ENCODE measurements at regions of chr5 and their contacts with region 1.

Region 1: GRCh38 chr5:36397901-36398536 is 96.3 kb upstream of the RANBP3L start:
- DNase-seq: peak; percentile 58
- H3K4me3 ChIP-seq: no peak overlapping the region
- H3K27ac ChIP-seq: no peak overlapping the region
- H3K4me1 ChIP-seq: peaks cover 48% of the 10 kb centered on the region
- CTCF ChIP-seq: peak; percentile 89

Region 2: GRCh38 chr5:36079200-36079761 is 318.7 kb before region 1 on chr5:
- CTCF ChIA-PET with region 1: no interaction called
- POLR2A ChIA-PET with region 1: no interaction called
- intact Hi-C with region 1: loop called (anchors 5 kb)
- DNase-seq: peak; percentile 63
- H3K4me3 ChIP-seq: no peak overlapping the region
- H3K27ac ChIP-seq: no peak overlapping the region
- H3K4me1 ChIP-seq: no peaks in the 10 kb centered on the region
- CTCF ChIP-seq: peak; percentile 87

Region 3: GRCh38 chr5:36177715-36178523 is 220.1 kb before region 1 on chr5:
- CTCF ChIA-PET with region 1: no interaction called
- POLR2A ChIA-PET with region 1: interaction called, 9 read pairs
- intact Hi-C with region 1: loop called (anchors 1 kb)
- DNase-seq: peak; percentile 57
- H3K4me3 ChIP-seq: no peak overlapping the region
- H3K27ac ChIP-seq: no peak overlapping the region
- H3K4me1 ChIP-seq: peaks cover 14% of the 10 kb centered on the region
- CTCF ChIP-seq: peak; percentile 90

Region 4: GRCh38 chr5:36264202-36264760 is 133.7 kb before region 1 on chr5:
- CTCF ChIA-PET with region 1: interaction called, 3 read pairs
- POLR2A ChIA-PET with region 1: interaction called, 4 read pairs
- intact Hi-C with region 1: loop called (anchors 1 kb)
- DNase-seq: no peak
- H3K4me3 ChIP-seq: no peak overlapping the region
- H3K27ac ChIP-seq: no peak overlapping the region
- H3K4me1 ChIP-seq: peaks cover 28% of the 10 kb centered on the region
- CTCF ChIP-seq: no peak

Region 5: GRCh38 chr5:36305571-36306326 is 92.3 kb before region 1 on chr5:
- CTCF ChIA-PET with region 1: no interaction called
- POLR2A ChIA-PET with region 1: interaction called, 4 read pairs
- intact Hi-C with region 1: loop called (anchors 2 kb)
- DNase-seq: peak; percentile 72
- H3K4me3 ChIP-seq: no peak overlapping the region
- H3K27ac ChIP-seq: no peak overlapping the region
- H3K4me1 ChIP-seq: peaks cover 32% of the 10 kb centered on the region
- CTCF ChIP-seq: peak; percentile 93

Region 6: DNA sequence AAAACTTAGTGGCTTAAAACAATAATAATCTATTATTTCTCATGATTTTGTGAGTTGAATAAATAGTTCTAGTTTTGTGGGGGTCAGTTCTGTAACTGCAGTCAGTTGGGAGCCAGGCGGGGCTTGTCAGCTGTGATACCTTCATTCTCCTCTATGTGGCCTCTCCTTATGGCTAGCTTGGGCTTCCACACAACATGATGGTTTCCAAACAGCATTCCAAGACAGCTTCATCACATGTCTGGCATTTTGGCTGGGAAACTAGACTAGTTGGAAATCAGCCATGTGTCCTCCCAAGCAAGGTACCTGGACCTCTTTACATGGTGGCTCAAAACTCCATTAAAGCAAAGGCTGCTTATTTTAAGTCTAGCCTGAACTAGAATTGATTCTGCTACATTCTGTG is 34.9 kb before region 1 on chr5:
- CTCF ChIA-PET with region 1: no interaction called
- POLR2A ChIA-PET with region 1: no interaction called
- intact Hi-C with region 1: no loop called
- DNase-seq: no peak
- H3K4me3 ChIP-seq: no peak overlapping the region
- H3K27ac ChIP-seq: no peak overlapping the region
- H3K4me1 ChIP-seq: peaks cover 46% of the 10 kb centered on the region
- CTCF ChIP-seq: peak; percentile 47

Region 7: GRCh38 chr5:36436306-36436705 is 38.3 kb after region 1 on chr5:
- CTCF ChIA-PET with region 1: no interaction called
- POLR2A ChIA-PET with region 1: no interaction called
- intact Hi-C with region 1: no loop called
- DNase-seq: no peak
- H3K4me3 ChIP-seq: no peak overlapping the region
- H3K27ac ChIP-seq: no peak overlapping the region
- H3K4me1 ChIP-seq: no peaks in the 10 kb centered on the region
- CTCF ChIP-seq: no peak

Region 8: GRCh38 chr5:36569491-36569890 is 171.5 kb after region 1 on chr5:
- CTCF ChIA-PET with region 1: no interaction called
- POLR2A ChIA-PET with region 1: no interaction called
- intact Hi-C with region 1: no loop called
- DNase-seq: no peak
- H3K4me3 ChIP-seq: no peak overlapping the region
- H3K27ac ChIP-seq: no peak overlapping the region
- H3K4me1 ChIP-seq: no peaks in the 10 kb centered on the region
- CTCF ChIP-seq: no peak

Measured in OCI-LY7 (cell line).